Aorta (tissue), 5 donors: ENCODE measurements at regions of chr11 and their contacts with region 1.

Region 1: DNA sequence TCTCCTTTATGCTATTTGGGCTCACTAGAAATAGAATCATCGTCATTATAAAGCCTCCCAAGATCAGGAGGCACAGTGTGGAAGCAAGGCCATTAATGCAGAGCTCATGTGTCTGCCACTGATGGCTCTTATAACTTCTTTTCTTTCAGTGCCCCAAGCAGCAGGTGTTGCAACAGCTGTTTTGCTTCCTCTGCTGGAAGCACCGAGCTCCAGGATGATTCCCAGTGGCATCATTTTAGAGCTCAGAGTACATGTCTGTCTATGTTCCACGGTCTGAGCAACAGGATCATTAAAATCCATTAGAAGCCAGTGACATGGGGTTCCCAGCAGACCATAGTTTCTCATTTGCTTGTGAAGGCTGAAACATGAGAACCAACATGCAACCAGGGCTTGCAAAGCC is 803.0 kb upstream of the FAT3 start:
- DNase-seq: no peak
- ATAC-seq: no peak
- H3K4me3 ChIP-seq: no peak overlapping the region
- H3K27ac ChIP-seq: no peak overlapping the region
- H3K4me1 ChIP-seq: no peaks in the 10 kb centered on the region
- H3K27me3 ChIP-seq: no peaks in the 10 kb centered on the region

Region 2: DNA sequence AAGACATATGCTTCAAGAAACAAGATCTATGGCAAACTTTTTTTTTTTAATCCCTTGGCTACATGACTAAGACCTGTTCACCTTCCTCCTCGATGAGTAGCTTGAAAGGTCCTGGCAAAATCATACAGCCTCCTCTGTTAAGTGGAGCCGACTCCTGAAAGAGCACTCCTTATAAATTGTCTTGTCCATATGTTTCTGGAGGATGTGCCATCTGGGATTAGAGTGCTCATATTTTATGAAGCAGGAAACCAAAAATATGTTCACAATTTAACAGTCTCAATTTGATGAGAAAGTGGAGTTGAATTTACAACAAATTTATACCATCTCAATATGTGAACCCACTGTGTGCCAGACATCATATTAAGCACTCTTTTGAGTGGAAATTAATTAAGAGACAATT is 109.1 kb before region 1 on chr11:
- intact Hi-C with region 1: no loop called
- DNase-seq: no peak
- ATAC-seq: no peak
- H3K4me3 ChIP-seq: no peak overlapping the region
- H3K27ac ChIP-seq: no peak overlapping the region
- H3K4me1 ChIP-seq: no peaks in the 10 kb centered on the region
- H3K27me3 ChIP-seq: no peaks in the 10 kb centered on the region

Region 3: GRCh38 chr11:91350931-91351330 is 70.7 kb before region 1 on chr11:
- intact Hi-C with region 1: no loop called
- DNase-seq: no peak
- ATAC-seq: no peak
- H3K4me3 ChIP-seq: no peak overlapping the region
- H3K27ac ChIP-seq: no peak overlapping the region
- H3K4me1 ChIP-seq: no peaks in the 10 kb centered on the region
- H3K27me3 ChIP-seq: no peaks in the 10 kb centered on the region

Region 4: DNA sequence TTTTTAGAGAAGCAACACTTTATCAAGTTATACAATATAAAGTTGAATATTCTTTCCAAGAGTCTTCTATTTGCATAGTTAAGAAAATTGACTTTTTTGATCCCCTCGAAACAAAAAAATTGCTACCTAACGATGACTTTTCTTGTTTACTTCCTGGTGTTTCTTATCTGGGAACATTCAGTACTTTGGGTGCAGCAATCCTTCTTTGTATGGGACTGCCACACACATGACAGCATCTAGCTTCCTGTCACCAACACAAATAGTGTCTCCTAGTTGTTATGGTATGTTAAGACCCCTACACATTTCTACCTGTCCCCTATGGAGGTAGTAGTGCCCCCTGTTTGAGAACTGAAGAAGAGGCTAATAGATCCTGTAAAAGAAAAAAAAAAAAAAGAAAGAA is 38.7 kb before region 1 on chr11:
- intact Hi-C with region 1: no loop called
- DNase-seq: no peak
- ATAC-seq: no peak
- H3K4me3 ChIP-seq: no peak overlapping the region
- H3K27ac ChIP-seq: no peak overlapping the region
- H3K4me1 ChIP-seq: no peaks in the 10 kb centered on the region
- H3K27me3 ChIP-seq: no peaks in the 10 kb centered on the region

Region 5: DNA sequence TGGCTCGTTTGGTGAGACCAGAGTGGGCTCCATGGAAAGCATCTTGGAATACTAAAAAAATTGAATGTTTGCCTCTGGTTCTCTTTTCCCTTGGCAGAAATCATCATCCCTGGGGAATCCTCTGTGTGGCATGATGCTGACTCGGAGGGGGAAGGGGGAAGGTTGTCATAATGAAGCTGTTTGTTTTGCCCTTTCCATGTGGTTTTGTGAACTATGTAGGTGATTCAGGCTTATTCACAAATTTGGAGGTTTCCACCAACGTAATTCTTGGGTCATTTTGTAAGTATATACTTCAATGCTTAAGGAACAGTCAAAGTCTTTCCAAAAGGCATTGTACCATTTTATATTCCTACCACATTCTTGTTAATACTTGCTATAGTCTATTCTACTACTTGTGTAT is 49.0 kb after region 1 on chr11:
- intact Hi-C with region 1: loop called in 1 of 2 experiments (anchors 10 kb)
- DNase-seq: no peak
- ATAC-seq: no peak
- H3K4me3 ChIP-seq: no peak overlapping the region
- H3K27ac ChIP-seq: no peak overlapping the region
- H3K4me1 ChIP-seq: no peaks in the 10 kb centered on the region
- H3K27me3 ChIP-seq: no peaks in the 10 kb centered on the region